ENCODE measurements at regions of chr21 and their contacts with region 1.

Region 1: DNA sequence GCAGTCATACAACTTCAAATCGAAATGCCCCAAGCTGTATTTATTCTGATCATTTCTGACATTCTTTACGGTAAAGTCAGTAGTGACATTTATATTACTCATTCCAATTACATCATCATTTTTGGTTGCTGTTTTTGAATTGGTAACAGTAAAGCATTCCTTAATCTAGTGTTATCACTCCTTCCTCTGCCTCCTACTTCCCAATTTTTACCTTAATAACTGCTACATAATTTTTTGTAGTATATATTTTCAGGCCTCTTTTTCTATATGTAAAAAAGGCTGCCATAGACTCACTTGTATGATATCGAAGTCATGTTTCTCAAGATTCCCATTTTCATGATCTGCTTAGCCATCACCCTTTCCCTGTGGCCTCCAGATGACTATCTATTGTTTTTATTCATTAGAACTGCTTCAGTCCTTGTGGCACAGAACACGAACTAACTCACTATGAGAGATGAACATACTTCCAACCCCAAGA is 167.2 kb downstream of the RUNX1 start:
- DNase-seq: no peak
- H3K4me3 Mint-ChIP-seq: peak overlapping the region; percentile 43
- H3K27ac Mint-ChIP-seq: peak overlapping the region; percentile 84
- H3K4me1 Mint-ChIP-seq: peaks cover 67% of the 10 kb centered on the region
- H3K27me3 Mint-ChIP-seq: no peaks in the 10 kb centered on the region

Region 2: GRCh38 chr21:34836103-34836932 is 45.6 kb before region 1 on chr21:
- CTCF ChIA-PET with region 1: no interaction called
- POLR2A ChIA-PET with region 1: no interaction called
- intact Hi-C with region 1: loop called (anchors 5 kb)
- DNase-seq: peak; percentile 72
- H3K4me3 Mint-ChIP-seq: no peak overlapping the region
- H3K27ac Mint-ChIP-seq: peak overlapping the region; percentile 19
- H3K4me1 Mint-ChIP-seq: peaks cover 55% of the 10 kb centered on the region
- H3K27me3 Mint-ChIP-seq: no peaks in the 10 kb centered on the region

Region 3: DNA sequence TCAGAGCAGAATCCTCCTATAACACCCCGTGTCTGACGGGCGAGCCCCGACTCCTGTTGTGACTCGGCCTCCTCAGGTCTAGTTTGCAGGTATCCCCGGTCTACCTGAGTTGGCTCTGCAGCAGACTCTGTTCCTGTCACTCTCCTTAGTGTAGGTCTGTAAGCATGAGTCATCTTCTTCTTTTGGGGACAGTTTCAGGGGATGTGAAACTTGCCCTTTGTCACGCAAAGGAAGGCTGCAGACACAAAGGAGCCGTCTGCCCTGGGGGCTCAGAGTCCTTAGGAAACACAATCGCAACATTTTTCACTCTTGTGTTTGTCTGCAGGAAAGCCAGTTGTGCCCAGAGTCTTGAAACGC is 16.0 kb before region 1 on chr21:
- CTCF ChIA-PET with region 1: interaction called, 3 read pairs
- POLR2A ChIA-PET with region 1: interaction called, 3 read pairs
- intact Hi-C with region 1: loop called (anchors 1 kb)
- DNase-seq: peak; percentile 74
- H3K4me3 Mint-ChIP-seq: peak overlapping the region; percentile 27
- H3K27ac Mint-ChIP-seq: peak overlapping the region; percentile 68
- H3K4me1 Mint-ChIP-seq: peaks cover 62% of the 10 kb centered on the region
- H3K27me3 Mint-ChIP-seq: no peaks in the 10 kb centered on the region

Region 4: GRCh38 chr21:34892209-34892608 is 10.3 kb after region 1 on chr21:
- CTCF ChIA-PET with region 1: no interaction called
- POLR2A ChIA-PET with region 1: no interaction called
- intact Hi-C with region 1: no loop called
- DNase-seq: no peak
- H3K4me3 Mint-ChIP-seq: no peak overlapping the region
- H3K27ac Mint-ChIP-seq: no peak overlapping the region
- H3K4me1 Mint-ChIP-seq: peaks cover 56% of the 10 kb centered on the region
- H3K27me3 Mint-ChIP-seq: peaks cover 5% of the 10 kb centered on the region